Heart left ventricle (tissue), 16 donors: ENCODE measurements at regions of chr17 and their contacts with region 1.

Region 1: GRCh38 chr17:2029911-2030778 is at the start of gene DPH1:
- DNase-seq: peak; percentile 90 to 94 (median 92)
- ATAC-seq: peak; percentile 83 to 93 (median 88)
- H3K4me3 ChIP-seq: peak within 1 kb of the TSS; percentile 64 to 100 (median 91)
- H3K27ac ChIP-seq: peak within 1 kb of the TSS in 10 of 12 donors; percentile 44 to 87 (median 72)
- H3K4me1 ChIP-seq: peaks cover 10 to 48% (median 29%) of the 10 kb centered on the region in 12 donors
- H3K27me3 ChIP-seq: peaks cover 0 to 29% (median 0%) of the 10 kb centered on the region in 9 donors
- CTCF ChIP-seq: no peak
- POLR2A ChIP-seq: peak in 1 of 2 donors; percentile 65
- total RNA-seq, gene DPH1: 14.0 to 38.1 (median 27.6) TPM

Region 2: GRCh38 chr17:1561400-1562175 is 468.6 kb before region 1 on chr17:
- intact Hi-C with region 1: loop called in 1 of 10 experiments (anchors 10 kb)
- DNase-seq: peak in 2 of 5 donors; percentile 33 to 66
- ATAC-seq: peak in 3 of 4 donors; percentile 23 to 41 (median 28)
- H3K4me3 ChIP-seq: peak overlapping the region; percentile 70 to 95 (median 84)
- H3K27ac ChIP-seq: peak overlapping the region; percentile 28 to 95 (median 82)
- H3K4me1 ChIP-seq: peaks cover 3 to 51% (median 24%) of the 10 kb centered on the region in 12 donors
- H3K27me3 ChIP-seq: no peaks in the 10 kb centered on the region
- CTCF ChIP-seq: peak in 7 of 12 donors; percentile 14 to 51 (median 32)
- POLR2A ChIP-seq: no peak

Region 3: GRCh38 chr17:1673041-1673785 is 356.9 kb before region 1 on chr17:
- intact Hi-C with region 1: loop called in 2 of 10 experiments (anchors 2 to 10 kb)
- DNase-seq: no peak
- ATAC-seq: no peak
- H3K4me3 ChIP-seq: no peak overlapping the region
- H3K27ac ChIP-seq: no peak overlapping the region
- H3K4me1 ChIP-seq: peaks cover 3 to 19% (median 13%) of the 10 kb centered on the region in 12 donors
- H3K27me3 ChIP-seq: no peaks in the 10 kb centered on the region
- CTCF ChIP-seq: no peak
- POLR2A ChIP-seq: no peak

Region 4: DNA sequence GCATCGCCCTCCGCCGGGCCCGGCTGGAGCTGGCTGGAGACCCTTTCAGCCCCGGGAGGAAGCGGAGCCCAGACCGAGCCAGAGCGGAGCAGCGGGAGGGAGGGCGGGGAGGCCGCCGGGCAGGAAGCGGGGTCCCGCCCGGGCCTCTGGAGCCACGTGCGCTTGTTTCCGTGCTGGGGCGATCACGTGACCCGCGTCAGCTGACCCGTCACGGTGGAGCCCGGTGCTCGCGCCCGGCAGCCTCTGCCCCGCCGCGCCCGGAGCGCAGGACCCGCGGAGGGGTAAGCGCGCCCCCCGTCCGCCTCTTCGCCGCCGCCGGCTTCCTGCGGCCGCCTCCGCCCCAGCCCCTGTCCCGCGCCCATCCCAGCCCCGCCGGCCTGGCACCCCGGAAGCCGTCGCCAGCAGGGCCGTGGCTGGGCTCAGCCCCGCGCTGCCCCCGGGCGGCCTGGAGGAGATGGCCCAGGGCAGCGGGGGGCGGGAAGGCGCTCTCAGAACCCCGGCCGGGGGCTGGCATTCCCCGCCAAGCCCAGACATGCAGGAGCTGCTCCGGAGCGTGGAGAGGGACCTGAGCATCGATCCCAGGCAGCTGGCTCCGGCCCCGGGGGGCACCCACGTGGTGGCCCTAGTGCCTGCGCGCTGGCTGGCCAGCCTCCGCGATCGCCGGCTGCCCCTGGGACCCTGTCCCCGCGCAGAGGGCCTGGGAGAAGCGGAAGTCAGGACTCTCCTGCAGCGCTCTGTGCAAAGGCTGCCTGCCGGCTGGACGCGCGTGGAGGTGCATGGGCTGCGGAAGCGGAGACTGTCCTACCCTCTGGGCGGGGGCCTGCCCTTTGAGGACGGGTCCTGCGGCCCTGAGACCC is 305.4 kb before region 1 on chr17 and contains the start of gene WDR81:
- intact Hi-C with region 1: loop called in 2 of 10 experiments (anchors 5 to 10 kb)
- DNase-seq: peak; percentile 94 to 96 (median 96)
- ATAC-seq: peak; percentile 48 to 86 (median 84)
- H3K4me3 ChIP-seq: peak within 1 kb of the TSS; percentile 52 to 87 (median 66)
- H3K27ac ChIP-seq: peak within 1 kb of the TSS; percentile 64 to 96 (median 88)
- H3K4me1 ChIP-seq: peaks cover 0 to 87% (median 32%) of the 10 kb centered on the region in 12 donors
- H3K27me3 ChIP-seq: no peaks in the 10 kb centered on the region
- CTCF ChIP-seq: peak in 2 of 12 donors; percentile 8 to 25
- POLR2A ChIP-seq: peak; percentile 24 to 35
- total RNA-seq, gene WDR81: 7.2 to 29.0 (median 9.3) TPM

Region 5: DNA sequence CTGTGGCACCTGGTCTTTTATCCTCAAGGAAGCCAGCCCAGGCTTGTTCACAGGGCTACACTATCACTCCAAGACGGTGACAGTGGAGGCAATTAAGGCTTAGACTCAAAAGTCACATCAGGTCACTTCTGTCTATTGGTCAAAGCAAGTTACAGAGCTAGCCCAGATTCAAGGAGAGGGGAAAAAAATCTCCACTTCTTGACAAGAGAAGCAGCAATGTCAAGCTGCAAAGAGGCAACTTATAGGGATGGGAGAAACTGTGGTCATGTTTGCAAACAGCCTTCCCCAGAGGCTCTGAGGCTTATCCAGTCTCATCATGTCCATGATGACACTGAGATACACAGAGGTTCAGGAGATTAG is 236.7 kb before region 1 on chr17:
- intact Hi-C with region 1: loop called in 1 of 10 experiments (anchors 10 kb)
- DNase-seq: no peak
- ATAC-seq: no peak
- H3K4me3 ChIP-seq: no peak overlapping the region
- H3K27ac ChIP-seq: peak overlapping the region in 6 of 12 donors; percentile 6 to 92 (median 60)
- H3K4me1 ChIP-seq: peaks cover 0 to 34% (median 16%) of the 10 kb centered on the region in 12 donors
- H3K27me3 ChIP-seq: no peaks in the 10 kb centered on the region
- CTCF ChIP-seq: no peak
- POLR2A ChIP-seq: no peak

Region 6: DNA sequence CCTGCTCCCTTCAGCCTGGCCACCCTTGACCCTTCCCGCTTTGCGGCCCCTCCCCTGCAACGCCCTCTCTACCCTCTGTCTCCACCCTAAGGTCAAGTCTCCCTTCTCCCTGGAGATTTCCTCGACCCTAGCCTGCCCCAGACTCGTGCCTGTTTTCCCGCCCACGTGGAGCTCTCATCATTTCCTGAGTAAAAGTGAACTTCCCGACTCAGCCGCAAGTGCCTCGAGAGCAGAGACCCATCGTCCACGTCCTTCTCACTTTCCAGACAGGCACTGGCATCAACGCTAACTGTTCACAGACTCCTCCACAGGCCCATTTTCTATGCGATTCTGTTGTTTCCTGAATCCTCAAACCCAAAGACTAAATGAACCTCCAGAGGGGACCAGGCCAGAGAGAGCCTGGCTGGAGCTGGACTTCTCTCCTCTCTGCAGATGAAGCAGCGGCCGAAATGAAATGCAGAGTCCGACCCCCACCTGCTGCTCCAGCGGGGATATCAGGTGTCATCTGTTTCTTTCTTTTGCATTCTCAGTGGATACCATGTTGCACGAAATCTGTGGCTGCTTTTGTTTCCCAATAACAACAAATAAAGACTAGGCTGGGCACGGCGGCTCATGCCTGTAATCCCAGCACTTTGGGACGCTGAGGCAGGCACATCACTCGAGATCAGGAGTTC is 57.5 kb before region 1 on chr17:
- intact Hi-C with region 1: loop called in 1 of 10 experiments (anchors 5 kb)
- DNase-seq: peak in 2 of 5 donors; percentile 39 to 51
- ATAC-seq: peak in 3 of 4 donors; percentile 20 to 53 (median 21)
- H3K4me3 ChIP-seq: no peak overlapping the region
- H3K27ac ChIP-seq: no peak overlapping the region
- H3K4me1 ChIP-seq: peaks cover 0 to 24% (median 8%) of the 10 kb centered on the region in 12 donors
- H3K27me3 ChIP-seq: peaks cover 0 to 21% (median 5%) of the 10 kb centered on the region in 9 donors
- CTCF ChIP-seq: no peak
- POLR2A ChIP-seq: no peak